Sigmoid colon (tissue), 7 donors: ENCODE measurements at regions of chr14 and their contacts with region 1.

Region 1: GRCh38 chr14:51996148-51996746 is 6.9 kb downstream of the RTRAF start:
- DNase-seq: no peak
- H3K4me3 ChIP-seq: no peak overlapping the region
- H3K27ac ChIP-seq: no peak overlapping the region
- H3K4me1 ChIP-seq: peaks cover 0 to 51% (median 10%) of the 10 kb centered on the region in 4 donors
- H3K27me3 ChIP-seq: no peaks in the 10 kb centered on the region
- CTCF ChIP-seq: peak; percentile 59 to 78 (median 64)
- EP300 ChIP-seq: no peak
- POLR2A ChIP-seq: no peak

Region 2: GRCh38 chr14:51901475-51902024 is 94.7 kb before region 1 on chr14:
- intact Hi-C with region 1: no loop called
- DNase-seq: no peak
- H3K4me3 ChIP-seq: no peak overlapping the region
- H3K27ac ChIP-seq: no peak overlapping the region
- H3K4me1 ChIP-seq: peaks cover 0 to 9% (median 4%) of the 10 kb centered on the region in 4 donors
- H3K27me3 ChIP-seq: no peaks in the 10 kb centered on the region
- CTCF ChIP-seq: no peak
- EP300 ChIP-seq: no peak
- POLR2A ChIP-seq: no peak

Region 3: GRCh38 chr14:51929166-51929565 is 67.1 kb before region 1 on chr14:
- intact Hi-C with region 1: no loop called
- DNase-seq: no peak
- H3K4me3 ChIP-seq: no peak overlapping the region
- H3K27ac ChIP-seq: no peak overlapping the region
- H3K4me1 ChIP-seq: peaks cover 0 to 21% (median 7%) of the 10 kb centered on the region in 4 donors
- H3K27me3 ChIP-seq: no peaks in the 10 kb centered on the region
- CTCF ChIP-seq: no peak
- EP300 ChIP-seq: no peak
- POLR2A ChIP-seq: no peak

Region 4: GRCh38 chr14:52068615-52069303 is 72.5 kb after region 1 on chr14 and contains the start of gene NID2:
- intact Hi-C with region 1: loop called (anchors 2 kb)
- DNase-seq: peak; percentile 97
- H3K4me3 ChIP-seq: peak within 1 kb of the TSS; percentile 53 to 89 (median 84)
- H3K27ac ChIP-seq: peak within 1 kb of the TSS; percentile 89 to 93 (median 92)
- H3K4me1 ChIP-seq: peaks cover 0 to 36% (median 27%) of the 10 kb centered on the region in 4 donors
- H3K27me3 ChIP-seq: no peaks in the 10 kb centered on the region
- CTCF ChIP-seq: peak in 1 of 4 experiments; percentile 11
- EP300 ChIP-seq: no peak
- POLR2A ChIP-seq: peak; percentile 44 to 46
- total RNA-seq, gene NID2: 26.4 to 52.9 (median 29.9) TPM